ENCODE measurements at regions of chr1 and their contacts with region 1.

Region 1: GRCh38 chr1:225318706-225319575 is 108.9 kb downstream of the LBR start:
- DNase-seq: peak; percentile 55
- H3K4me3 Mint-ChIP-seq: no peak overlapping the region
- H3K27ac Mint-ChIP-seq: no peak overlapping the region
- H3K4me1 Mint-ChIP-seq: peaks cover 2% of the 10 kb centered on the region
- H3K27me3 Mint-ChIP-seq: no peaks in the 10 kb centered on the region

Region 2: GRCh38 chr1:225304996-225305395 is 13.9 kb before region 1 on chr1:
- CTCF ChIA-PET with region 1: interaction called, 16 read pairs
- intact Hi-C with region 1: no loop called
- DNase-seq: no peak
- H3K4me3 Mint-ChIP-seq: no peak overlapping the region
- H3K27ac Mint-ChIP-seq: no peak overlapping the region
- H3K4me1 Mint-ChIP-seq: no peaks in the 10 kb centered on the region
- H3K27me3 Mint-ChIP-seq: peaks cover 2% of the 10 kb centered on the region

Region 3: GRCh38 chr1:225343624-225344023 is 24.7 kb after region 1 on chr1:
- CTCF ChIA-PET with region 1: interaction called, 4 read pairs
- intact Hi-C with region 1: loop called (anchors 1 kb)
- DNase-seq: no peak
- H3K4me3 Mint-ChIP-seq: no peak overlapping the region
- H3K27ac Mint-ChIP-seq: no peak overlapping the region
- H3K4me1 Mint-ChIP-seq: no peaks in the 10 kb centered on the region
- H3K27me3 Mint-ChIP-seq: peaks cover 13% of the 10 kb centered on the region

Region 4: DNA sequence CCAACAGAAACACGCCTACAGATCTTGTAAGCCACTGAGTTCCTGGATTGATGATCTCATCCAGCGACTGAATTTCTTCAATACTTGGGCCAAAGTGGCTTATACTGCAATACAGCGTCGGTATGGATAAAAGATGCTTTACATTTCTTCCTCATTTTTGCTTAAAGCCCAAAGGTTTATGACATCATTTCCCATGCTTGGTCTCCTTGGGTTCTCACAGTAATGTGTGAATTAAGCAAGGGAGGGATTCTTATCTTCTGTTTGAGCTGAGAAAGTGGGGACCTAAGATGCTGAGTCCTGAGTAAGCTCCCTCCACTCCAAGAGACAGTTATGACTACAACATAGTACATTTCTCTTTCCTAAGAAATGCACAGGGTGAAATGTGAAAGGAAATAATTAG is 69.4 kb after region 1 on chr1:
- CTCF ChIA-PET with region 1: no interaction called
- intact Hi-C with region 1: no loop called
- DNase-seq: no peak
- H3K4me3 Mint-ChIP-seq: no peak overlapping the region
- H3K27ac Mint-ChIP-seq: no peak overlapping the region
- H3K4me1 Mint-ChIP-seq: no peaks in the 10 kb centered on the region
- H3K27me3 Mint-ChIP-seq: no peaks in the 10 kb centered on the region

Region 5: GRCh38 chr1:225441314-225442122 is 122.6 kb after region 1 on chr1:
- CTCF ChIA-PET with region 1: interaction called, 4 read pairs
- intact Hi-C with region 1: loop called (anchors 5 kb)
- DNase-seq: no peak
- H3K4me3 Mint-ChIP-seq: peak overlapping the region; percentile 12
- H3K27ac Mint-ChIP-seq: peak overlapping the region; percentile 36
- H3K4me1 Mint-ChIP-seq: peaks cover 51% of the 10 kb centered on the region
- H3K27me3 Mint-ChIP-seq: no peaks in the 10 kb centered on the region

Region 6: DNA sequence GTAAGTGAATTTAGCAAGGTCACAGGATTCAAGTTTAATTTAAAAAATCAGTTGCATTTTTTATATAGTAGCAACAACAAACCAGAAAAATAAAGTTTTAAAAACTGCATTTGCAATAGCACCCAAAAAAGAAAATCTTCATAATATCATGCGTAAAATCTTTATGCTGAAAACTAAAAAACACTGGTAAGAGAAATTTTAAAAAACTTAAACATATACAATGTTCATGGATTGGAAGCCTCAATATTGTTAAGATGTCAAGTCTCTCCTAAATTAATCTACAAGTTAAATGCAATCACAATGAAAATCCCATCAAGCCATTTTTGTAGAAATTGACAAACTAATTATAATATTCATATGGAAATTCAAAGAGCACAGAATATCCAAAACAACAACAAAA is 268.4 kb after region 1 on chr1:
- CTCF ChIA-PET with region 1: no interaction called
- intact Hi-C with region 1: no loop called
- DNase-seq: no peak
- H3K4me3 Mint-ChIP-seq: no peak overlapping the region
- H3K27ac Mint-ChIP-seq: no peak overlapping the region
- H3K4me1 Mint-ChIP-seq: no peaks in the 10 kb centered on the region
- H3K27me3 Mint-ChIP-seq: peaks cover 4% of the 10 kb centered on the region